ENCODE measurements at regions of chr1 and their contacts with region 1.

Region 1: DNA sequence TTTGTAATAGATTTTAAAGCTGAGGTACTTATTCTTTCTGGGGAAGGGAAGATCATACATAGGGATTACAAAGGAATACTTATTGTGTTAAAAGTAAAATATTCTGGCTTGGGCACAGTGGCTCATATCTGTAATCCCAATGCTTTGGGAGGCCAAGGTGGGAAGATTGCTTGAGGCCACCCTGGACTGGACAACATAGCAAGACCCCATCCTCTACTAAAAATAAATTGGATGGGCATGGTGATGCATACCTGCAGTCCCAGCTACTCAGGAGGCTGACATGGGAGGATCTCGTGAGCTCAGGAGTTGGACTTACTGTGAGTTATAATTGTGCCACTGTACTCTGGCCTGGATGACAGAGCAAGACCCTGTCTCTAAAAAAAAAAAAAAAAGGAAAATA is 27.6 kb downstream of the GABPB2 start:
- DNase-seq: no peak
- H3K4me3 Mint-ChIP-seq: no peak overlapping the region
- H3K27ac Mint-ChIP-seq: no peak overlapping the region
- H3K4me1 Mint-ChIP-seq: no peaks in the 10 kb centered on the region
- H3K27me3 Mint-ChIP-seq: no peaks in the 10 kb centered on the region

Region 2: GRCh38 chr1:151024540-151025146 is 73.5 kb before region 1 on chr1:
- CTCF ChIA-PET with region 1: interaction called, 29 read pairs
- POLR2A ChIA-PET with region 1: interaction called, 5 read pairs
- DNase-seq: peak; percentile 87
- H3K4me3 Mint-ChIP-seq: peak overlapping the region; percentile 18
- H3K27ac Mint-ChIP-seq: peak overlapping the region; percentile 62
- H3K4me1 Mint-ChIP-seq: peaks cover 6% of the 10 kb centered on the region
- H3K27me3 Mint-ChIP-seq: no peaks in the 10 kb centered on the region

Region 3: DNA sequence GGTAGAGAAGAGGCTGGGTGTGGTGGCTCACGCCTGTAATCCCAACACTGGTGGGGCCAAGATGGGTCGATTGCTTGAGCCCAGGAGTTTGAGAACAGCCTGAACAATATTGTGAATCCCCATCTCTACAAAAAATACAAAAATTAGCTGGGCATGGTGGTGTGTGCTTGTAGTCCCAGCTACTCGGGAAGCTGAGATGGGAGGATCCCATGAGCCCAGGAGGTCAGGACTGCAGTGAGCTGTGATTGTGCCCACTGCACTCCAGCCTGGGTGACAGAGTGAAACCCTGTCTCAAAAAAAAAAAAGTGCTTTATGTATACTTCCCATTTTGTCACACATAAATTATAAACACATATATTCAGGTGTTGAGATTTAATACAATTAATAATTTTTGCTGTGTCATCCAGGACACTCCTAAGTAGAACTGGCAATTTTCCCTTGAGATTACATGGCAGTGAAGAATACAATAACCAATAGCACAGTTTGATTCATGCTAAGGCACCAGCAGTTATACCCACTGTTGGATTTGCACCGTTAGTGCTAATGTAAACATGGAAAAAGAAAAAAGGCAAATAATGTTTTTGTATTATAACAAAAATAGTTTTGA is 12.1 kb before region 1 on chr1:
- CTCF ChIA-PET with region 1: interaction called, 16 read pairs
- POLR2A ChIA-PET with region 1: interaction called, 5 read pairs
- DNase-seq: no peak
- H3K4me3 Mint-ChIP-seq: no peak overlapping the region
- H3K27ac Mint-ChIP-seq: no peak overlapping the region
- H3K4me1 Mint-ChIP-seq: no peaks in the 10 kb centered on the region
- H3K27me3 Mint-ChIP-seq: no peaks in the 10 kb centered on the region

Region 4: DNA sequence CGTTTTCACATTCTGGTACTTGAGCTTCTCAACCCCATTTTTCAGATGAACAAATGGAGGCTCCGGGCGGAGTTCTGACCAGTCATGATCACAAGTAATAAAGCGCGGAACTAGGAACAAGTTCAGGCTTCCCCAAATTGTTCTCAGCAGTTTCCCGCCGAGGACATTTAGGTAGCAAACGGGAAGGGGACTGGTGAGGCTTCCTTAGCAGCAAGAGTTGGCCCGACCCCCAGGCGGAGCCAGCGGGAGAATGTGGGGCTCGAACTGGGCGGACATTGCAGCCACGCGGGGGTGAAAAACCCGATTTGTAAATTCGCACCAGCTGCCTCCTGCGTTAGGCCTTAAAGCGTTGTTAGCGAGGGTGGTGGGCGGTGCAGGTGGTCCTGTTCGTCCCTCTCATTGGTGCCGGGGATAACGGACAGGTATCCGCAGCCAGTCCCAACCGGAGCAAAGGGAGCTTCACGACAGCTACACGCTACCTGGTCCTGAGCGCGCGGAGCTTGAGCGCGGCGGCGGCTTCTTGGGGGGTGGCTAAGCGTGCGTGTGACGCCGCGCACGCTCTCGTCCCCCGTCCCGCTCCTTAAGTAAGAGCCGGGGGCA is 33.0 kb after region 1 on chr1:
- CTCF ChIA-PET with region 1: interaction called, 12 read pairs
- POLR2A ChIA-PET with region 1: no interaction called
- DNase-seq: peak; percentile 67
- H3K4me3 Mint-ChIP-seq: peak overlapping the region; percentile 38
- H3K27ac Mint-ChIP-seq: no peak overlapping the region
- H3K4me1 Mint-ChIP-seq: peaks cover 11% of the 10 kb centered on the region
- H3K27me3 Mint-ChIP-seq: peaks cover 13% of the 10 kb centered on the region

Region 5: GRCh38 chr1:151156515-151156819 is 58.3 kb after region 1 on chr1 and contains the start of gene TNFAIP8L2:
- CTCF ChIA-PET with region 1: interaction called, 267 read pairs
- POLR2A ChIA-PET with region 1: interaction called, 23 read pairs
- DNase-seq: peak; percentile 87
- H3K4me3 Mint-ChIP-seq: peak within 1 kb of the TSS; percentile 98
- H3K27ac Mint-ChIP-seq: peak within 1 kb of the TSS; percentile 96
- H3K4me1 Mint-ChIP-seq: peaks cover 50% of the 10 kb centered on the region
- H3K27me3 Mint-ChIP-seq: no peaks in the 10 kb centered on the region
- total RNA-seq, gene TNFAIP8L2: 31.2 to 32.0 TPM

Region 6: GRCh38 chr1:151254217-151255213 is 156.4 kb after region 1 on chr1 and contains the start of gene PSMD4:
- CTCF ChIA-PET with region 1: interaction called, 40 read pairs
- POLR2A ChIA-PET with region 1: no interaction called
- DNase-seq: peak; percentile 95
- H3K4me3 Mint-ChIP-seq: peak within 1 kb of the TSS; percentile 87
- H3K27ac Mint-ChIP-seq: peak within 1 kb of the TSS; percentile 83
- H3K4me1 Mint-ChIP-seq: peaks cover 29% of the 10 kb centered on the region
- H3K27me3 Mint-ChIP-seq: no peaks in the 10 kb centered on the region
- total RNA-seq, gene PSMD4: 178 to 188 TPM

Region 7: DNA sequence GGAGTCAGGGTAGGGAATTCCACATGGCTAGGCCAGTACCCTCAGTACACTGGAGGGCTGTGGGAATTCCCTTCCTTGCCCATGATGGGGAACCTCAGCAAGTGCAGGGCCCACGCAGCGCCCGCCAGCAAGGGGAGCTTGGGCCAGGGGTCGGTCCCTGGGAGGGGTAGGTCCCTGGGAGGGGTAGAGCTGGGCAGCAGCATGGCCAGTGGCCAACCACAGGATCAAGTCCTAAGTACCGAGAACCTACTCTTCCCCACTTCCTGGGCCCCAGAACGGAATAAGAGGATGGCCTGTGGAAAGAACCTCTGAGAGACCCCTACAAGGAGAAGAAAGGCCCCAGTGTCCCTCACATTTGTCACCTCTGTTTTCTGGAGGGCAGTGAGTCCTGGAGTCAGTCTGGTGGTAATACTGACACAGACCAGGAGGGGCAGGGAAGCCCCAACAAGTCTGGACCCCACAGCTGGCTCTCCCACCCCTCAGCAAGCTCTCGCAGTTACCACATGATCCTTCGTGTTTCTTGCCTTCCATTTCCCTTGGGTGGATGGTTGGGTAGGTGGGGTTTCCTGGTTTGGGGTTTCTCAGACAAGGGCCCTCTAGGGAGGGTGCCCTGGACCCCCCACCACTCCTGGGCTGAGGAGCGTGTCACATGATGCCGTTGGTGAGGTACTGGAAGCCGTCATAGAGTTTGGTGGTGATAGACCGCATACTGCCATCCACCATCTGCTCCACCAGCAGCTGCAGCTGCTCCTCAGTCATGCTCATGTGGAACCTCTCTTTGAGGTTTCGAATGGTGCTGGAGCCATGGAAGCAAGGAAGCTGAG is 194.3 kb after region 1 on chr1:
- CTCF ChIA-PET with region 1: no interaction called
- POLR2A ChIA-PET with region 1: no interaction called
- DNase-seq: no peak
- H3K4me3 Mint-ChIP-seq: no peak overlapping the region
- H3K27ac Mint-ChIP-seq: peak overlapping the region; percentile 31
- H3K4me1 Mint-ChIP-seq: peaks cover 4% of the 10 kb centered on the region
- H3K27me3 Mint-ChIP-seq: no peaks in the 10 kb centered on the region